Dorsolateral prefrontal cortex (tissue), 120 donors: ENCODE measurements at regions of chr2 and their contacts with region 1.

Region 1: DNA sequence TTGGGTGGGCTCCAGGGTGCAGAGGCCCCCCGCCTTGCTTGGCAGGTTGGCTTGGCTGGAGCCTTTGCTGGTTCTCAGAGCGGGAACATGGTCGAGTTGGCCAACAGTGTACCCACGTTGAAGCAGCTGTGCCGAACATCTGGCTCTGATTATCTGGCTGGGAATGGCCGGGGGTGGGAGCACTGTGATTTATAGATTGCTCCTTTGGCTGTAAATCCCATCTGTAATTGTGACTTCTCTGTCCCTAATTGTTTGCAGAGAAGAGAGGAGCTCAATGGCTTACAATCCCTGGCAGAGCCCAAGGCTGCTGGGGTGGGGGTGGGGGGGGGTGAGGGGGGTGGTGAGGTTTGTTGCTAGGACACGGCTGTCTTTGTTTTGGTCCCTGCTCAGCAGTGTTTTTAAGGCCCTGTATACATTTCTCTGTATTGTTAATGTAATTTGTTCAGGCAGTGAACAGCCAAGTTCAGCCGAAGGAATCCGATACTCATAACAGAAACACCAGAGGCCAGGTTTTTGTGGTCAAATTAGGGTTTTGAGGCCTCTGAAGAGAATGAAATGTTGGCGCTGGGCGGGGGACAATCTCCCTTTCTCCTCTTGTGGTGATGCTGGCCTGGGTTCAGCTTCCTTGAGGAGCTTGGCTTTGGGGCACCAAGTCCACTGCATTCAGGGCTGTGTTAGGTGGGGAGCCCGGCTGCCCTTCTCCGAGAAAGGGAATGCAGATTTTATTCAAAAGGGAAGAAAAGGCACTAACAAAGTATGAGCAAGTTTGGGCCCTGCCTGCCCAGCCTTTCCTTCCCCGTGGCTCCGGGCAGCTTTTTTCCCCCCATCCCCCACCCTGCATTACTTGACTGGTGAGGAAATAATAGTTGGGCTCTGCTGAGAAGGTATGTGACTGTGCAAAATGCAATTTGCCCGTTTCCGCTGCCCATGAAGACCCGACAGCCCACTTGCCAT is 82.5 kb downstream of the TCF7L1 start:
- DNase-seq: peak in 8 of 10 donors; percentile 10 to 60 (median 48)
- H3K4me3 ChIP-seq: peak overlapping the region in 25 of 59 donors; percentile 0 to 50 (median 23)
- H3K27ac ChIP-seq: peak overlapping the region in 50 of 59 donors; percentile 16 to 90 (median 67)
- H3K27me3 ChIP-seq: peaks cover 0 to 3% (median 0%) of the 10 kb centered on the region in 45 donors
- CTCF ChIP-seq: no peak

Region 2: GRCh38 chr2:85234868-85235267 is 19.1 kb after region 1 on chr2:
- intact Hi-C with region 1: loop called in 1 of 2 experiments (anchors 2 kb)
- DNase-seq: no peak
- H3K4me3 ChIP-seq: no peak overlapping the region
- H3K27ac ChIP-seq: peak overlapping the region in 18 of 59 donors; percentile 1 to 57 (median 29)
- H3K27me3 ChIP-seq: no peaks in the 10 kb centered on the region
- CTCF ChIP-seq: no peak

Region 3: GRCh38 chr2:85248773-85249509 is 33.2 kb after region 1 on chr2:
- intact Hi-C with region 1: loop called in 1 of 2 experiments (anchors 5 kb)
- DNase-seq: no peak
- H3K4me3 ChIP-seq: peak overlapping the region in 1 of 59 donors; percentile 11
- H3K27ac ChIP-seq: peak overlapping the region in 47 of 59 donors; percentile 1 to 81 (median 63)
- H3K27me3 ChIP-seq: no peaks in the 10 kb centered on the region
- CTCF ChIP-seq: no peak